T-cell (primary cell): ENCODE measurements at regions of chr11 and their contacts with region 1.

Region 1: GRCh38 chr11:109112261-109112660 is 309.7 kb upstream of the C11orf87 start:
- DNase-seq: no peak
- ATAC-seq: no peak
- H3K4me3 ChIP-seq: no peak overlapping the region
- H3K4me3 Mint-ChIP-seq: no peak overlapping the region
- H3K27ac ChIP-seq: no peak overlapping the region
- H3K27ac Mint-ChIP-seq: no peak overlapping the region
- H3K4me1 ChIP-seq: no peaks in the 10 kb centered on the region
- H3K4me1 Mint-ChIP-seq: no peaks in the 10 kb centered on the region
- H3K27me3 ChIP-seq: no peaks in the 10 kb centered on the region
- H3K27me3 Mint-ChIP-seq: peaks cover 0 to 8% of the 10 kb centered on the region in 2 donors

Region 2: GRCh38 chr11:108863528-108863927 is 248.7 kb before region 1 on chr11:
- CTCF ChIA-PET with region 1: no interaction called
- POLR2A ChIA-PET with region 1: interaction called in 1 of 2 experiments, 22 read pairs
- DNase-seq: peak in 3 of 35 experiments; percentile 2 to 37 (median 3)
- ATAC-seq: no peak
- H3K4me3 ChIP-seq: no peak overlapping the region
- H3K4me3 Mint-ChIP-seq: no peak overlapping the region
- H3K27ac ChIP-seq: no peak overlapping the region
- H3K27ac Mint-ChIP-seq: no peak overlapping the region
- H3K4me1 ChIP-seq: no peaks in the 10 kb centered on the region
- H3K4me1 Mint-ChIP-seq: peaks cover 5 to 7% (median 7%) of the 10 kb centered on the region in 3 donors
- H3K27me3 ChIP-seq: no peaks in the 10 kb centered on the region
- H3K27me3 Mint-ChIP-seq: no peaks in the 10 kb centered on the region

Region 3: GRCh38 chr11:109071712-109072524 is 40.3 kb before region 1 on chr11:
- CTCF ChIA-PET with region 1: no interaction called
- POLR2A ChIA-PET with region 1: no interaction called
- DNase-seq: no peak
- ATAC-seq: no peak
- H3K4me3 ChIP-seq: no peak overlapping the region
- H3K4me3 Mint-ChIP-seq: no peak overlapping the region
- H3K27ac ChIP-seq: no peak overlapping the region
- H3K27ac Mint-ChIP-seq: no peak overlapping the region
- H3K4me1 ChIP-seq: no peaks in the 10 kb centered on the region
- H3K4me1 Mint-ChIP-seq: peaks cover 0 to 7% (median 5%) of the 10 kb centered on the region in 3 donors
- H3K27me3 ChIP-seq: no peaks in the 10 kb centered on the region
- H3K27me3 Mint-ChIP-seq: peaks cover 0 to 8% of the 10 kb centered on the region in 2 donors